ENCODE measurements at regions of chr5 and their contacts with region 1.

Region 1: DNA sequence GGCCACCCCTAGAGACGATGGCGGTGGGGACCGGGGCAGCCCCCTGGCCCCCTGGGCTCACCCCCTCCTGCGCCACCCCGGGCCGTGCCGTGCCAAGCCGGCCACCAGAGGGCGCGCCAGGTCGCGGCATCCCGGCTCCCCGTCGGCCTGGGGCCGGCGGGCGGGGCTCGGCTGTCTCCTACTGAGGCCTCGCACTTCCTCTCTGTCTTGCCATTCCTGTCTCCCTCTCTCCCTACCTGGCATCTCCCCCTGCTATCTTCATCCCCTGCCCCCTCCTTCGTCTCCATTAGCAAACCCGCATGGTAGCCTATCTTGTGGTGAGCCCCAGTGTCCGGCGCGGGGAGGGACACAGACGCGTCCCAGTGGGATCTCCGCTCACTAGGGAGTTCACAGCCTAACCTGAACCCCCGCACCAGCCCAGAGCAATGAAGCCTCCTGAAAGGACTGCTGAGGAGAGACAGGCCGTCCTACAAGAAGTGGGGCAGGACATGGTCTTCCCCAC is 29.8 kb upstream of the FABP6 start:
- DNase-seq: peak; percentile 70
- ATAC-seq: peak; percentile 100
- H3K4me3 Mint-ChIP-seq: peak overlapping the region; percentile 58
- H3K27ac Mint-ChIP-seq: no peak overlapping the region
- H3K4me1 Mint-ChIP-seq: peaks cover 3% of the 10 kb centered on the region
- H3K27me3 Mint-ChIP-seq: no peaks in the 10 kb centered on the region

Region 2: DNA sequence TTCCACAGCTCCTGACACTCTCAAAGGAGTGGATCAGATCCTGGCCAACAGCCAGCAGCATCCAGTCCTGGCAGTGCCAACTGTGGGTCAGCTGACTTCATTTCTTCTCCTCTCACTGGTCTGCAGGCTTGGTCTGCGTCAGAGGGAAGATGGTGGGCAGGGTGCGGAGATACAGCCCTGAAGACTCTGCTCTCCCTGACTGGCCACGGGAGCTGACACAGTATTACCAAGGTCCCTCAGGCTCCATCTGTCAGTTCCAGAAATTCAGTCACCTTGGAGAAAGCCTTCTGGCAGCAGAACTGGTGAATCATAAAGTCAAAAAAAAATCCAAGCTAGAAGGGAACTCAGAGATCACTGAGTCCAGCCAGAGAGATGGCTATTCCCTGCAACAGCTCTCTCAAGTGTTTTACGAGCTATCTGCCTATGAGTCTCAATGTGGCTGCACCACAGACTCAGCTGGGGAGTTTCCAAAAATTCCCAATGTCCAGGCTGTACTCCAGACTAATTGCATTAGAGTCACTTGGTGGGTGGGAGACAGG is 143.0 kb after region 1 on chr5:
- CTCF ChIA-PET with region 1: interaction called, 23 read pairs
- POLR2A ChIA-PET with region 1: no interaction called
- DNase-seq: no peak
- ATAC-seq: no peak
- H3K4me3 Mint-ChIP-seq: no peak overlapping the region
- H3K27ac Mint-ChIP-seq: no peak overlapping the region
- H3K4me1 Mint-ChIP-seq: peaks cover 9% of the 10 kb centered on the region
- H3K27me3 Mint-ChIP-seq: peaks cover 3% of the 10 kb centered on the region